PC-9 (cell line): ENCODE measurements at regions of chr1 and their contacts with region 1.

Region 1: DNA sequence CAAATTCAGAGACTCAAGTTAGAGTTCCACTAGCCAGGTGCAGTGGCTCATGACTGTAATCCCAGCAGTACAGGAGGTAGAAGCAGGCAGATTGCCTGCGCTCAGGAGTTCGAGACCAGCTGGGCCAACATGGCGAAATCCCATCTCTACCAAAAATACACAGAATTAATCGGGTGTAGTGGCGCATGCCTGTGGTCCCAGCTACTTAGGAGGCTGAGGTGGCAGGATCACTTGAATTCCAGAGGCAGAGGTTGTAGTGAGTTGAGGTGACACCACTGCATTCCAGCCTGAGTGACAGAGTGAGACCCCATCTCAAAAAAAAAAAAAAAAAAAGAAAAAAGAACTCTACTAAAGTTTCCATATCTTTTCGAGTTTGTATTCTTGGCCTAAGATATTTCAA is 36.7 kb upstream of the CHRM3 start:
- DNase-seq: no peak
- H3K4me3 ChIP-seq: no peak overlapping the region
- H3K27ac ChIP-seq: no peak overlapping the region
- H3K4me1 ChIP-seq: no peaks in the 10 kb centered on the region
- H3K27me3 ChIP-seq: peaks cover 16% of the 10 kb centered on the region
- CTCF ChIP-seq: no peak

Region 2: DNA sequence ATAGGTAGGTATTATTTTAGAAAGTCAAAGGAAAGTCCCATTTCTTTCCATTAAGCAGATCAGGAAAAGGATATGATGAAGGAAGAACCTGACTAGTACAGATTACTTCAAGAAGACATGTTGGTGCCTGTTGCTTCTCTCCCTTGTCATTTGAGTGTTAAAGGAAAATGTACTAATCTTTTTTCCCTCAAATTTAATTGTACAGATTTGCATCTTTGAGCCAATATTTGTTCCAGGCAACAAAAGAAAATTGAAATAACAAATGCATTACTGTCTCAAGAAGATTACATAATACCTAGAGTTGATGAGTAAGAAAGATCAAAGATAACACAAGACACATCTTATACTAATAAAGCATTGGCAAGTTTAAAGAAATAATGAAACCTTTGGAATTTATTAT is 892.1 kb before region 1 on chr1:
- CTCF ChIA-PET with region 1: no interaction called
- POLR2A ChIA-PET with region 1: no interaction called
- intact Hi-C with region 1: no loop called
- DNase-seq: no peak
- H3K4me3 ChIP-seq: no peak overlapping the region
- H3K27ac ChIP-seq: no peak overlapping the region
- H3K4me1 ChIP-seq: no peaks in the 10 kb centered on the region
- H3K27me3 ChIP-seq: no peaks in the 10 kb centered on the region
- CTCF ChIP-seq: no peak

Region 3: DNA sequence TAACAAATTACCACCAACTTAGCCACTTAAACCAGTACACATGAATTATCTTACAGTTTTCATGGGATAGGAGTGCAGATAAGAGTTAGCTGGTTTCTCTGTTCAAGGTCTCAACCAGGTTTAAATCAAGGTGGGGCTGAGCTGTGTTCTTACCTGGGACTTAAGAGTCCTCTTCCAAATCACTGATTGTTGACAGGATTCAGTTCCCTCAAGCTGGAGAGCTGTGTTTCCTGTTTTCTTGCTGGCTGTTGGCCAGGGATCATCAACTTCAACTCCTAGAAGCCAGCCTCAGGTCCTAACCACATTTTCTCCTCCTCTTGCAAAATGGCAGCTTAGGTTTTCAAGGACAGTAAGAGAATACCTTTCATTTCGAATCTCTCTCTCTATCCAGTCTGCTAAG is 87.2 kb before region 1 on chr1:
- CTCF ChIA-PET with region 1: no interaction called
- POLR2A ChIA-PET with region 1: interaction called, 31 read pairs
- intact Hi-C with region 1: no loop called
- DNase-seq: no peak
- H3K4me3 ChIP-seq: no peak overlapping the region
- H3K27ac ChIP-seq: no peak overlapping the region
- H3K4me1 ChIP-seq: no peaks in the 10 kb centered on the region
- H3K27me3 ChIP-seq: no peaks in the 10 kb centered on the region
- CTCF ChIP-seq: no peak

Region 4: DNA sequence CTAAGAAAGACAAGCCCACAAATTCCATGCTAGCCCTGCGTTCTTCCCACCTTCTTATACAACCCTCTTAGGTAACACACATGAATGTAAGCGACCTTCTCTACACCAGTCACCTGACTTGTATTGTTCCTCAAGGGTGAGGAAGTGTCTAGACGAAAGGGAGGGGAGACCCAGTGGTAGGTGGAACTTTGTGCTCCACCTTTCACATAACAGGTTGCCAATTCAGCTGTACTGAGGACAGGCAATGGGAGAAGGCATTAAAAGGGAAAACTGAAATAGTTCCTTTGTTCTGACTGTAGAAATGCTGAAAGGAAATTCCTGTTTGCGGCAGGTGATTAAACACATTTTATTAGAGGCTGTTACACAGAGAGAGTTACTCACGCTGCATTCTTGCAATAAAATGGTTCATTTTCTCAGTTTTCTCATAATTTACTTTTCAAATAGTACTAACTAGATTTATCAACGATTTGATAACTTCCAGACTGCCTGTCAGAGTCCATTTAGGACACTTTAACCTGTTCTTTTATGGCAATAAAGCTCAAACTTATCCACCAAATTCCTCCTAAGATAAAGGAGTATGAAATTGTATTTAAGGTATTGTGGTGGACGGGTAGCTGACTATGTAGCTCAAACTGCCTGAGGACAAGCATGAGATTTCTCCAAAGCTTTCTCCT is 18.9 kb after region 1 on chr1:
- CTCF ChIA-PET with region 1: no interaction called
- POLR2A ChIA-PET with region 1: no interaction called
- intact Hi-C with region 1: no loop called
- DNase-seq: no peak
- H3K4me3 ChIP-seq: no peak overlapping the region
- H3K27ac ChIP-seq: no peak overlapping the region
- H3K4me1 ChIP-seq: no peaks in the 10 kb centered on the region
- H3K27me3 ChIP-seq: 0 out of 2 replicates have a peak, but pooled peaks cover 4% of the 10 kb centered on the region
- CTCF ChIP-seq: no peak

Region 5: GRCh38 chr1:239587066-239587465 is 237.4 kb after region 1 on chr1:
- CTCF ChIA-PET with region 1: no interaction called
- POLR2A ChIA-PET with region 1: no interaction called
- intact Hi-C with region 1: no loop called
- DNase-seq: no peak
- H3K4me3 ChIP-seq: no peak overlapping the region
- H3K27ac ChIP-seq: no peak overlapping the region
- H3K4me1 ChIP-seq: no peaks in the 10 kb centered on the region
- H3K27me3 ChIP-seq: no peaks in the 10 kb centered on the region
- CTCF ChIP-seq: no peak